MCF 10A (cell line): ENCODE measurements at regions of chr7 and their contacts with region 1.

Region 1: DNA sequence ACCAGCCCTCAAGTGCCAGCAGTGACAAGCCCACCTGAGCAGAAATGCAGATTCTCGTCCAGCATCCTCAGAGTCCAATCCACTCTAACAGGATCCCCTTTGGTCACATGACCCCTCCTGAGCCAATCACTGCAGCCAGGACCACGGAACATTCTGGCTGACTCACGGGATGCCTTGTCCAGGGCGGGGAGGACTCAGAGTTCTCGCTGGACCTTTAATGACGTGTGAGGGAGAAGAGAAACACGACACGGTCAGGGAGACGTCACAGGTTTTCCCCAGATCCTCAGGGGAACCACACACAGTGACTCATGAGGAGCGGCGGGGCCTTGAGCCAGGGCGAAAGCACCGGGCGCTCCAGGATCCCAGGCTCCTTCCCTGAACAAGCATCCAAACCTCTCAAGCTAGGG is 155.7 kb downstream of the PTPRN2 start:
- DNase-seq: peak; percentile 100
- H3K4me3 Mint-ChIP-seq: peak overlapping the region; percentile 75
- H3K27ac Mint-ChIP-seq: peak overlapping the region; percentile 99
- H3K4me1 Mint-ChIP-seq: peaks cover 44% of the 10 kb centered on the region
- H3K27me3 Mint-ChIP-seq: no peaks in the 10 kb centered on the region
- CTCF ChIP-seq: no peak

Region 2: GRCh38 chr7:158395780-158396278 is 36.1 kb before region 1 on chr7:
- CTCF ChIA-PET with region 1: interaction called, 5 read pairs
- POLR2A ChIA-PET with region 1: interaction called, 29 read pairs
- intact Hi-C with region 1: no loop called
- DNase-seq: peak; percentile 47
- H3K4me3 Mint-ChIP-seq: no peak overlapping the region
- H3K27ac Mint-ChIP-seq: peak overlapping the region; percentile 64
- H3K4me1 Mint-ChIP-seq: peaks cover 16% of the 10 kb centered on the region
- H3K27me3 Mint-ChIP-seq: peaks cover 6% of the 10 kb centered on the region
- CTCF ChIP-seq: no peak

Region 3: GRCh38 chr7:158461824-158462223 is 29.9 kb after region 1 on chr7:
- CTCF ChIA-PET with region 1: no interaction called
- POLR2A ChIA-PET with region 1: no interaction called
- intact Hi-C with region 1: no loop called
- DNase-seq: no peak
- H3K4me3 Mint-ChIP-seq: no peak overlapping the region
- H3K27ac Mint-ChIP-seq: no peak overlapping the region
- H3K4me1 Mint-ChIP-seq: no peaks in the 10 kb centered on the region
- H3K27me3 Mint-ChIP-seq: peaks cover 12% of the 10 kb centered on the region
- CTCF ChIP-seq: no peak

Region 4: GRCh38 chr7:158572003-158572828 is 140.3 kb after region 1 on chr7:
- CTCF ChIA-PET with region 1: no interaction called
- POLR2A ChIA-PET with region 1: no interaction called
- intact Hi-C with region 1: loop called (anchors 5 kb)
- DNase-seq: peak; percentile 51
- H3K4me3 Mint-ChIP-seq: no peak overlapping the region
- H3K27ac Mint-ChIP-seq: no peak overlapping the region
- H3K4me1 Mint-ChIP-seq: peaks cover 12% of the 10 kb centered on the region
- H3K27me3 Mint-ChIP-seq: no peaks in the 10 kb centered on the region
- CTCF ChIP-seq: peak; percentile 13

Region 5: DNA sequence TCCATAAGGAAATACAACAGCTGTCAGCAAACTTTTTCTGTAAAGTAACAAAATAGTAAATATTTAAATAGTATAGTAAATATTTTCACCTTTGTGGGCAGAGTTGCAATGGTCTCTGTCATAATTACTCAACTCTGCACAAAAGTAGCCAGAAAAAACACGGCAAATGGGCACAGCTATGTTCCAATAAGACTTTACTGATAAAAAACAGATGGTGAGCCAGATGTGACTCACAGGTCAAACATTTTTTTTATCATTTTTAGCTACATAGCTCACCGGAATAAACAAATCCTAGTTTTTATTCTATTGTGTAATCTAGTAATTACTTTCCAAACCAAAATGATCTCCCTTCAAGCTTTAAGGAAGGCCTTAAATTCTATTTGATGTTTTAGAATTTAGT is 217.3 kb after region 1 on chr7:
- CTCF ChIA-PET with region 1: interaction called, 4 read pairs
- POLR2A ChIA-PET with region 1: interaction called, 6 read pairs
- intact Hi-C with region 1: loop called (anchors 2 kb)
- DNase-seq: peak; percentile 80
- H3K4me3 Mint-ChIP-seq: peak overlapping the region; percentile 39
- H3K27ac Mint-ChIP-seq: peak overlapping the region; percentile 93
- H3K4me1 Mint-ChIP-seq: peaks cover 17% of the 10 kb centered on the region
- H3K27me3 Mint-ChIP-seq: no peaks in the 10 kb centered on the region
- CTCF ChIP-seq: no peak